Motor neuron (in vitro differentiated cells): ENCODE measurements at regions of chr21 and their contacts with region 1.

Region 1: GRCh38 chr21:38244885-38245545 is 11.8 kb upstream of the KCNJ15 start:
- ATAC-seq: peak in 2 of 8 experiments; percentile 54 to 69
- H3K4me3 ChIP-seq: no peak overlapping the region
- H3K27ac ChIP-seq: no peak overlapping the region
- H3K4me1 ChIP-seq: no peaks in the 10 kb centered on the region

Region 2: GRCh38 chr21:38333301-38334272 is 88.6 kb after region 1 on chr21:
- in situ Hi-C with region 1: loop called in 1 of 9 experiments (anchors 25 kb)
- ATAC-seq: peak in 1 of 8 experiments; percentile 79
- H3K4me3 ChIP-seq: no peak overlapping the region
- H3K27ac ChIP-seq: no peak overlapping the region
- H3K4me1 ChIP-seq: no peaks in the 10 kb centered on the region